Calu3 (cell line): ENCODE measurements at regions of chr7 and their contacts with region 1.

Region 1: DNA sequence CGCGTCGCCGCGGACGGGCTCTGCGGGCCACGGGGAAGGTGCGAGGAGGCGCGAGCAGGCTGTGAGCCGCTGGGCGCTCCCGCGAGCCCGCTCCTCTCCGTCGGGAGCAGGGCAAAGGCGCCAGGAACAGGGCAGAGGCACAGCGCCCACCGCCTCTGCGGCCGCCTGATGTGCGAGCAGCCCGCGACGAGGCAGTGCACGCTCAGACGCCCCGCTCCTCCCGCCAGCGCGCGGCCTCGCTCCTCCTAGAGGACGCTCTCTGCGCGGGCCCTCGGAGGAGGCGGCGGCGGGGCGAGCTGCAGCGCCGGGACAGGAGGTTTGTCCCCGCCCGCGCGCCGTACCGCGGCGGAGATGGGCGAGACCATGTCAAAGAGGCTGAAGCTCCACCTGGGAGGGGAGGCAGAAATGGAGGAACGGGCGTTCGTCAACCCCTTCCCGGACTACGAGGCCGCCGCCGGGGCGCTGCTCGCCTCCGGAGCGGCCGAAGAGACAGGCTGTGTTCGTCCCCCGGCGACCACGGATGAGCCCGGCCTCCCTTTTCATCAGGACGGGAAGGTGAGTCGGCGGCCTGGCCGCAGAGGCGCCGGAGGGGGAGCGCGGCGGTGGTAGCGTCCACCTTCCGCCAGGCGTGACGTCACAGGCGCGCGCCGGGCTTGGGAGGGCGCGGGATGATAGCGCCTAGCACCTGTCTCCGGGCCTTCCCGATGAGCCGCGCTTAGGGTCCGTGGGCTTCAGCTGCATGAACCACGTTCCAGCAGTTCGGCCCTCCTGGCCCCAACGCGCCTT is 731 bp downstream of the LANCL2 start:
- DNase-seq: peak; percentile 99
- H3K4me3 Mint-ChIP-seq: peak overlapping the region; percentile 99
- H3K27ac Mint-ChIP-seq: peak overlapping the region; percentile 100
- H3K4me1 Mint-ChIP-seq: peaks cover 11% of the 10 kb centered on the region
- H3K27me3 Mint-ChIP-seq: no peaks in the 10 kb centered on the region
- CTCF ChIP-seq: peak; percentile 46

Region 2: DNA sequence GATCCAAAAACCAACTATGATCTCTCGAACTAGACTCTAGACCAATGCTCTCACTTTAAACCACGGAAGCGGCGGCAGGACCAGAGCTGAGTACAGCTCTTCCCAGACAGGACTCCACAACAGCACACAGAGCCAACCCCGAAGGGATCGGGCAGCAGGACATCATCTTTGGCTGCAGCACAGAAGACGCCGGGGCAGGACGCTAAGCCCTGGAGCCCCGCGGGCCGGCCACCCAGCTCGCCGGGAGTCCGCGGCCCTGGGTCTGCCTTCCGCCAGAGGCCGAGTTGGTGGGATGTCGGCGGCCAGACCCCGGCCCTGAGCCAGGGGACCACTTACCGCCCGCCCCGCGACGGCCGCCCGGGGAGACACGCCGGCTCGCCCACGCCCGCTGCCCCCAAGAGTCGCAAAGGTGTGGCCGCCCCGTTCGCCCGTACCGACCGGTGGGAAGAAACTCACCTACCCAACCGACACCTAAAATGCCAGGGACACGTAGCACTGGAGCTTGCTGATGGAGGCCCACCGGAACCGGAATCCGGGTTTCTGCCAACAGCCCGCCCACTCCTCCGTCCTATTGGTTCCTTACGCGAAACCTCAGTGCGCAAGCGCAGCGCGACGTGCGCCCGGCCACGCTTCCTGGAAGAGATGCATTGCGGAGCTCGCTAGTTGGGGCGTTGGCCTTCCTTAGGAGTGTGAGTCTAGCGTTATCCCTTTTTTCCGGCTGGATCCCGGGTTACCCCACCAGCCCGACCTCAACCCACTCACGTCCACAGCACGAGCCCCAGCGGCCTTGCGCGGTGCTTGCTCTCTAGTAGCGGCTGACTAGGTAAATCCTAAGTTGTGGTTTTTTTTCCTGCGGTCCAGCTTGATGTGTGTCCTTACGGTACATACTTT is 606.9 kb before region 1 on chr7 and contains the start of gene SEC61G:
- CTCF ChIA-PET with region 1: no interaction called
- intact Hi-C with region 1: loop called (anchors 5 kb)
- DNase-seq: peak; percentile 99
- H3K4me3 Mint-ChIP-seq: peak within 1 kb of the TSS; percentile 99
- H3K27ac Mint-ChIP-seq: peak within 1 kb of the TSS; percentile 99
- H3K4me1 Mint-ChIP-seq: peaks cover 23% of the 10 kb centered on the region
- H3K27me3 Mint-ChIP-seq: peaks cover 8% of the 10 kb centered on the region
- CTCF ChIP-seq: no peak
- total RNA-seq, gene SEC61G: 198 and 202 TPM in 2 replicates

Region 3: DNA sequence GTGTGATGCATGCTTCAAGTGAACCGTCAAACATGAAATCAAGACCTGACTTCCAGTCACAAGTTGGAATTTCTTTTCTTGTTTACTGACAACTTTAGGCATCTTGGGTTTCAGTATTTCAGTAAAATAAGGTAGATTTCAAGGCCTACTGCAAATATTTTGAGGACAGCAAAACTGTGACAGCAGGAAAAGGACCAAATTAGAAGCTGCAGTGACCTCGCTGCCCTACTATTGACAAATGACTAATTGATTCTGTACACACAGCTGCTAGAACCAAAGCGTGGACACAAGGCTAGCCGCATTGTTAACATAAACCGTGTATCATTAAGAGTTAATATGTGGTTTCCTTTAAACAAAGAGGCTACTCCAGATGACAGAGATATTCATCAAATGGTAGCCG is 501.2 kb before region 1 on chr7:
- CTCF ChIA-PET with region 1: interaction called, 12 read pairs
- intact Hi-C with region 1: no loop called
- DNase-seq: no peak
- H3K4me3 Mint-ChIP-seq: no peak overlapping the region
- H3K27ac Mint-ChIP-seq: no peak overlapping the region
- H3K4me1 Mint-ChIP-seq: peaks cover 19% of the 10 kb centered on the region
- H3K27me3 Mint-ChIP-seq: no peaks in the 10 kb centered on the region
- CTCF ChIP-seq: no peak

Region 4: DNA sequence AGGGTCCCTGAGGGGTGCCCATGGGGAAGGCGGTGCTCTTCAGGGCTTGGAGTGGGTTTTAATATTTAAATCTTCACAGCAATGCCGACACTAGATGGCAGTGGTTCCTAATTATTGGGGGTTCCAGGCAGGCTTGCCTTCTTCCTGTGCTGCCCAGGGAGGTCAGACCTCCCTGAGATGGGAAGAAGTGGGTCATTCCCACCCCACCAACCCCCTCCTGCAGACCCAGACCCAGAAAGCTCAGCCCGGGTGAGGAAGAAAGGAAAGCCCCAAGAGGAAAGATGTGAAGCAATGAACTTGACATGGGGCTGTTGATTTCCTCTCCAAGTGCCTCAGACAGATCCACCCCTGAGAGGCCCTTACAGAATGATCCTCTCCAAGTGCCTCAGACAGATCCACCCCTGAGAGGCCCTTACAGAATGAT is 85.8 kb before region 1 on chr7:
- CTCF ChIA-PET with region 1: interaction called, 3 read pairs
- intact Hi-C with region 1: loop called (anchors 5 kb)
- DNase-seq: peak; percentile 84
- H3K4me3 Mint-ChIP-seq: no peak overlapping the region
- H3K27ac Mint-ChIP-seq: no peak overlapping the region
- H3K4me1 Mint-ChIP-seq: no peaks in the 10 kb centered on the region
- H3K27me3 Mint-ChIP-seq: peaks cover 64% of the 10 kb centered on the region
- CTCF ChIP-seq: peak; percentile 89

Region 5: GRCh38 chr7:55325371-55325792 is 40.5 kb before region 1 on chr7:
- CTCF ChIA-PET with region 1: no interaction called
- intact Hi-C with region 1: loop called (anchors 5 kb)
- DNase-seq: no peak
- H3K4me3 Mint-ChIP-seq: no peak overlapping the region
- H3K27ac Mint-ChIP-seq: no peak overlapping the region
- H3K4me1 Mint-ChIP-seq: no peaks in the 10 kb centered on the region
- H3K27me3 Mint-ChIP-seq: peaks cover 42% of the 10 kb centered on the region
- CTCF ChIP-seq: no peak